Psoas muscle (tissue), 8 donors: ENCODE measurements at regions of chr4 and their contacts with region 1.

Region 1: GRCh38 chr4:165327211-165328100 is at the start of gene MSMO1:
- DNase-seq: peak; percentile 99 to 100
- ATAC-seq: peak; percentile 98 to 100 (median 99)
- H3K4me3 ChIP-seq: peak within 1 kb of the TSS; percentile 92
- H3K27ac ChIP-seq: peak within 1 kb of the TSS; percentile 62
- H3K4me1 ChIP-seq: peaks cover 10% of the 10 kb centered on the region
- H3K27me3 ChIP-seq: no peaks in the 10 kb centered on the region
- CTCF ChIP-seq: no peak
- total RNA-seq, gene MSMO1: 2.9 to 5.9 (median 4.0) TPM

Region 2: DNA sequence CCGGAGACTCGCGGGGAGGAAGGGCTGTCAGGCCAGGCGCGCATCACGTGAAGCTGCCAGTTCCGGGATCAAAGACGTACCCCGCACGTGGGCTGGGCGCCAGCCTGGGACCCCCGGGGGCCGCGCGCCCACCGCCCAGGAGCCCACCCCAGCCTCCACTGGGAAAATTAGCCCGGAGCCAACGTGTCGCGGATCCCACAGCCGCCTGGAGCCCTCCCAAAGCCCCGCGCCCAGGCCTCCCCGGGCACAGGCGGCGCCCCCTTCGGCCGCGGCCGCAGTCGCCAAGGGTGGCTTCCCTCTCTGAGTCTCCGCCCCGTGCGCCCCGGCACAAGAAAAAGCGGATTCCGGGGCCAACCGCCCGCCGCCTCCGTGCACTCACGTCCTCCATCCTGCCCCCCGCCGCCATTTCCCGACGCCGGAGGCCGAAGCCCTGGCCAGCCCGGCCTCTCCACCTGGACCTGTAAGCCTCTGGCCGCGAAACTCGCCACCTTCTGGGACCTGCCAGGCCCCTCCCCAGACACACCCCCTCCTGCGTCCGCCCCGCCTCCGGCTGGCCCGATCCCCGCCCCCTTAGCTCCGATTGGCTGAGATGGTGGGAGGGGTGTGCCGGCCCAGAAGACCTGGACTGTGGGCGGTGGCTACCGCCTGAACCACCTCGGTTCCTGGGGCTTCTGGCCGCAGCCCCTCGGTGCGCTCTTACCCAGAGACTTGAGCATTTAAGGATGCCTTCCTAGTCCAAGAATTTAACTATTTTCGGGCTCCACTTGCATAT is 214.9 kb before region 1 on chr4 and contains the start of gene TMEM192:
- intact Hi-C with region 1: loop called in 1 of 2 experiments (anchors 5 kb)
- DNase-seq: peak; percentile 90 to 96
- ATAC-seq: peak; percentile 99 to 100 (median 100)
- H3K4me3 ChIP-seq: peak within 1 kb of the TSS; percentile 98
- H3K27ac ChIP-seq: peak within 1 kb of the TSS; percentile 87
- H3K4me1 ChIP-seq: peaks cover 9% of the 10 kb centered on the region
- H3K27me3 ChIP-seq: no peaks in the 10 kb centered on the region
- CTCF ChIP-seq: peak; percentile 34
- total RNA-seq, gene TMEM192: 13.5 to 16.3 (median 15.3) TPM

Region 3: GRCh38 chr4:165131247-165131832 is 196.1 kb before region 1 on chr4:
- intact Hi-C with region 1: loop called in 1 of 2 experiments (anchors 10 kb)
- DNase-seq: no peak
- ATAC-seq: peak in 1 of 4 donors; percentile 73
- H3K4me3 ChIP-seq: no peak overlapping the region
- H3K27ac ChIP-seq: no peak overlapping the region
- H3K4me1 ChIP-seq: no peaks in the 10 kb centered on the region
- H3K27me3 ChIP-seq: no peaks in the 10 kb centered on the region
- CTCF ChIP-seq: peak; percentile 87

Region 4: DNA sequence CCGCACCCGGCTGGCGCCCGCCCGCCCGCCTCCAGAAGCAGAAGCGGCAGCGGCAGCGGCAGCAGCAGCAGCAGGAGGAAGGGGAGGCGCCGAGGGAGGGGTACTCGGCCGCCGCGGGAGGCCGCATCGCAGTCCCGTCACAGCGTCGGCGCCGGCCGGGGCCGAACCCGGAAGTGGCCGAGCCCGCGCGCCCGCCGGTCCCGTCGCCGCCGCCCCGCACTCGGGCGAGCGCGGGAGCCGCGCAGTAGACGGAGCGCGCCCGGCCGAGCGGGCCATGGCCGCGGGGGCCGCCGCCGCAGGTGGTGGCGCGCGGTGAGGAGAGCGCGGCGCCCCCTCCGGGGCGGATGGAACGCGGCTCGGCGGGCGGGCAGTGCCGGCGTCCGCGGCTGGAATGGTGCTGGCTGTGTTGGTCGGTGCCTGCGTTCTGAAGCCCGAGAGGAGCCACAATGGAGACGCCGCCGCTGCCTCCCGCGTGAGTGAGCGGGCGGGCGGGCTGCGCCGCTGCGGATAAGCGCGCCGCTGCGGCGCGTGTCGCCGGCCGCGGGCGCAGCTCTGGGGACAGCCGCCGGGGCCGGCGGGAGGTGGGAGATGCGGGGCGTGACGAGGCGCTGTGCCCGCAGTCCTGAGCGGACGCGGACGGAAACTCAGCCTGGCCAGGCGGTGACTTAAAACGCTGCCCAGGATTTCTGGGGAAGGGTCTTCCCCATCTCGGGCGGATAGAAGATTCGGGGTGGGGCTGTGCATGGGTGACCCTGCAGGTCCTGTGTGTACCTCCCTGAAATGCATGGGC is 119.8 kb before region 1 on chr4 and contains the start of gene KLHL2:
- intact Hi-C with region 1: loop called (anchors 2 to 10 kb)
- DNase-seq: peak; percentile 83 to 86
- ATAC-seq: peak; percentile 53 to 93 (median 91)
- H3K4me3 ChIP-seq: peak within 1 kb of the TSS; percentile 78
- H3K27ac ChIP-seq: peak within 1 kb of the TSS; percentile 65
- H3K4me1 ChIP-seq: peaks cover 5% of the 10 kb centered on the region
- H3K27me3 ChIP-seq: peaks cover 0 to 11% (median 0%) of the 10 kb centered on the region in 3 donors
- CTCF ChIP-seq: no peak
- total RNA-seq, gene KLHL2: 3.6 to 7.8 (median 5.2) TPM

Region 5: DNA sequence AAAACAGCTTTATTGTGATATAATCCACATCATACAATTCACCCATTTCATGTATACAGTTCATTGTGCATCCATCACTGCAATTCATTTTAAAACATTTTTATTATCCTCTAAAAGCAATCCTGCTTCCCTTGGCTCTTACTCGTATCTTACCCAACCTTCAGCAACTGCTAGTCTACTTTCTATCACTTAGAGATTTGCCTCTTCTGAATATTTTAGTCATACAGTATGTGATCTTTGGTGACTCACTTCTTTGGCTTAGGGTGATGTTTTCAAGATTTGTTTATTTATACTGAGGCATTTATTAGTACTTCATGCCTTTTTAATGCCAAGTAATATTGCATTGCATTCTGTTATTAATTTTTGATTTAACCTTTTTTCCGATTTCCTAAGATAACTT is 14.9 kb before region 1 on chr4:
- intact Hi-C with region 1: no loop called
- DNase-seq: no peak
- ATAC-seq: no peak
- H3K4me3 ChIP-seq: no peak overlapping the region
- H3K27ac ChIP-seq: no peak overlapping the region
- H3K4me1 ChIP-seq: no peaks in the 10 kb centered on the region
- H3K27me3 ChIP-seq: no peaks in the 10 kb centered on the region
- CTCF ChIP-seq: no peak